ENCODE measurements at regions of chr12 and their contacts with region 1.

Region 1: GRCh38 chr12:97148941-97149559 is 242.0 kb downstream of the NEDD1 start:
- DNase-seq: peak; percentile 44
- ATAC-seq: peak; percentile 94
- H3K4me3 Mint-ChIP-seq: no peak overlapping the region
- H3K27ac Mint-ChIP-seq: no peak overlapping the region
- H3K4me1 Mint-ChIP-seq: no peaks in the 10 kb centered on the region
- H3K27me3 Mint-ChIP-seq: peaks cover 17% of the 10 kb centered on the region
- CTCF ChIP-seq: no peak

Region 2: DNA sequence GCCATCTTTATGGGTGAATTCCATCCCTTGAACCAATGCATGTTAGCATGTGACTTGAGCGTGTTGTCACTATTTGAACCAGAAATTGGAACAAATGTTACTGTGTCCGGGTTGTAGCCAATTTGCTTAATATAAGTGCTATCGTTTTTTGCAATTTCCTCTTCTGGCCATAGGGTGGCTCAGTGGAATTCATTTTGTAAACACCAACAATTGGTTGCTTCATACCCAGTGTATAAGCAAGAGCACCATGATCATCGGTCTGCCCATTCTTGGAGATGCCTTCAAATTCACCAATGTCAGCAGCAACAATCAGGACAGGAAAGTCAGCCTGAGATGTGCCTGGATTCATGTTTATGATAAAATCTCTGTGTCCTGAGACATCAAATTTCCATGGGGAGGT is 247.0 kb before region 1 on chr12:
- CTCF ChIA-PET with region 1: no interaction called
- POLR2A ChIA-PET with region 1: no interaction called
- intact Hi-C with region 1: no loop called
- DNase-seq: no peak
- ATAC-seq: no peak
- H3K4me3 Mint-ChIP-seq: no peak overlapping the region
- H3K27ac Mint-ChIP-seq: no peak overlapping the region
- H3K4me1 Mint-ChIP-seq: peaks cover 8% of the 10 kb centered on the region
- H3K27me3 Mint-ChIP-seq: peaks cover 2% of the 10 kb centered on the region
- CTCF ChIP-seq: no peak

Region 3: DNA sequence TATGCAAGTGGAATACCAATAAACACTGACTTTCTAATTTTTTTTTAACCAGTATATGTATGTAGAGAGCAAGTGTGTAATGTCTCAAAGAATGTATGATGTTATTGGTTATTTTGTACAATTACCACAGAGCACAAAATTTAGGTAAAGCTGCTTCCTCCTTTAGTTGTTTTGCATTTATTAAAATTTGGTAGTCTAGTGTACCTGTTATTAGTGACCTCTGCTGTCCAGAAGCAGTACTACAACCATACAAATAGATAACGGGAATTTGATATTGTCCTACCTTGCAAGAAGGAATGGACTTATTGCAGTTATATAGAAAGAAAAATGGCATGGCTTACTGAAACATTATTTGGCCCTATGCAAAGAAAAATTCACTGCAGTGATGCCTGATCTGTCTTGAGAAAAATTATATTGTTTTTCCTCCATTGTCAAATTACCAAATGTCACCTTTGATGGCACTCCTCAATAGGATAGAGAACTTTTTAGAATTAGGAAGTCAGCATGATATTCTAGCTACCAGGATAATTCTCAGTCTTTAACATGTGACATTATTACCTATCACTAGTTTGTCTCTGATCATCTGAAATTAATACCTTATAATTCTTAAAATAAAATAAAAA is 159.6 kb after region 1 on chr12:
- CTCF ChIA-PET with region 1: interaction called, 11 read pairs
- POLR2A ChIA-PET with region 1: no interaction called
- intact Hi-C with region 1: loop called (anchors 1 kb)
- DNase-seq: no peak
- ATAC-seq: peak; percentile 49
- H3K4me3 Mint-ChIP-seq: no peak overlapping the region
- H3K27ac Mint-ChIP-seq: no peak overlapping the region
- H3K4me1 Mint-ChIP-seq: peaks cover 22% of the 10 kb centered on the region
- H3K27me3 Mint-ChIP-seq: peaks cover 23% of the 10 kb centered on the region
- CTCF ChIP-seq: peak; percentile 59

Region 4: GRCh38 chr12:97404543-97404942 is 255.5 kb after region 1 on chr12:
- CTCF ChIA-PET with region 1: interaction called, 9 read pairs
- POLR2A ChIA-PET with region 1: no interaction called
- intact Hi-C with region 1: loop called (anchors 1 kb)
- DNase-seq: no peak
- ATAC-seq: peak; percentile 50
- H3K4me3 Mint-ChIP-seq: no peak overlapping the region
- H3K27ac Mint-ChIP-seq: no peak overlapping the region
- H3K4me1 Mint-ChIP-seq: no peaks in the 10 kb centered on the region
- H3K27me3 Mint-ChIP-seq: peaks cover 3% of the 10 kb centered on the region
- CTCF ChIP-seq: no peak

Region 5: GRCh38 chr12:98002712-98003493 is 853.9 kb after region 1 on chr12:
- CTCF ChIA-PET with region 1: no interaction called
- POLR2A ChIA-PET with region 1: no interaction called
- intact Hi-C with region 1: loop called (anchors 1 kb)
- DNase-seq: no peak
- ATAC-seq: peak; percentile 28
- H3K4me3 Mint-ChIP-seq: no peak overlapping the region
- H3K27ac Mint-ChIP-seq: no peak overlapping the region
- H3K4me1 Mint-ChIP-seq: no peaks in the 10 kb centered on the region
- H3K27me3 Mint-ChIP-seq: peaks cover 6% of the 10 kb centered on the region
- CTCF ChIP-seq: no peak

Region 6: GRCh38 chr12:98373025-98373554 is 1224.0 kb after region 1 on chr12:
- CTCF ChIA-PET with region 1: no interaction called
- POLR2A ChIA-PET with region 1: no interaction called
- intact Hi-C with region 1: loop called (anchors 1 kb)
- DNase-seq: no peak
- ATAC-seq: no peak
- H3K4me3 Mint-ChIP-seq: no peak overlapping the region
- H3K27ac Mint-ChIP-seq: no peak overlapping the region
- H3K4me1 Mint-ChIP-seq: no peaks in the 10 kb centered on the region
- H3K27me3 Mint-ChIP-seq: peaks cover 8% of the 10 kb centered on the region
- CTCF ChIP-seq: no peak

Measured in activated B cell treated with CpG ODN at 0.5 μM for 24 hours (primary cell).